Mammary epithelial cell (primary cell): ENCODE measurements at regions of chr4 and their contacts with region 1.

Region 1: GRCh38 chr4:2934813-2935761 is 28.1 kb downstream of the NOP14 start:
- DNase-seq: peak; percentile 87
- H3K4me3 ChIP-seq: peak overlapping the region; percentile 71 to 94 (median 86)
- H3K27ac ChIP-seq: peak overlapping the region; percentile 94
- H3K4me1 ChIP-seq: peaks cover 43% of the 10 kb centered on the region
- H3K27me3 ChIP-seq: no peaks in the 10 kb centered on the region
- CTCF ChIP-seq: no peak

Region 2: DNA sequence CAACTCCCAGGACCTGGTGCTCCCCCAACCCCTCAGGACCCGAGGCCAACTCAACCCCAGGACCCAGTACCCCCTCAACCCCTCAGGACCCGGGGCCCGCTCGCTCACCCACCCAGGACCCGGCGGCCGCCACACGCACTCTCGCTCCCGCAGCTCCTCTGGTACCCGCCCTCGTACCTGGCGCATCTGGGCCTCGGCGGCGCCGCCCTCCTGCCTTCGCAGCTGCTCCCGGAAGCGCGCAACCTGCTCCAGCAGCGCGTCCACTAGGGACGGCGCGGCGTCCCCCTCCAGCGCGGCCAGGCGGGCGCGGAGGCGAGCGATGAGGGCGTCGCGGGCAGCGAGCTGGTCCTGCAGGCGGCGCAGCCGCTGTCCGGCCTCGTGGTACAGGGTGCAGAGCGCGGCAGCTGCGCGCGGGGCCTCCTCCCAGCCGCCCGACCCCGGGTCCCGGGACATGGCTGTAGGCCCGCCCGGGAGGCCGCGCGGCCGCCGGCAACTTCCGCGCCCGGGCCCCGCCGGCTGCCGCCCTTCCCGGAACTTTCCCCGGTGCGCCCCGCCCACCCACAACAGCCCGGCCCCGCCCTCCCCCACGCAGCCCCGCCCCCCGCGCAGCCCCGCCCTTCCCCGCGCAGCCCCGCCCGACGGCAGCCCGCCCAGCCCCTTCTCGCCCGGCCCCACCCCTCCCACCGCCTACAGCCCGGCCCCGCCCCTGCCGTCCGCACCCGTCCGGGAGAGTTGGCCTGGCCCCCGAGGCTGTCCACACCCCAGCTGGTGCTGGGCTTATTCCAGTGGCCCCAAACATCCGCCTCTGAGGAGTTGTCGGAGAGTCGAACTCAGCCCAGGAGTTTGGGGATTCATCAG is 179.0 kb before region 1 on chr4 and contains the start of gene TNIP2:
- CTCF ChIA-PET with region 1: no interaction called
- dilution Hi-C with region 1: no loop called
- in situ Hi-C with region 1: loop called in 1 of 2 experiments (anchors 25 kb)
- intact Hi-C with region 1: no loop called
- DNase-seq: peak; percentile 81
- H3K4me3 ChIP-seq: peak within 1 kb of the TSS; percentile 79 to 85 (median 80)
- H3K27ac ChIP-seq: peak within 1 kb of the TSS; percentile 44
- H3K4me1 ChIP-seq: peaks cover 17% of the 10 kb centered on the region
- H3K27me3 ChIP-seq: no peaks in the 10 kb centered on the region
- CTCF ChIP-seq: peak in 1 of 2 donors; percentile 42
- total RNA-seq, gene TNIP2: 21.8 to 32.5 TPM

Region 3: GRCh38 chr4:2761035-2761923 is 173.8 kb before region 1 on chr4:
- CTCF ChIA-PET with region 1: interaction called, 8 read pairs
- dilution Hi-C with region 1: no loop called
- in situ Hi-C with region 1: loop called in 1 of 2 experiments (anchors 25 kb)
- intact Hi-C with region 1: loop called (anchors 2 kb)
- DNase-seq: no peak
- H3K4me3 ChIP-seq: no peak overlapping the region
- H3K27ac ChIP-seq: no peak overlapping the region
- H3K4me1 ChIP-seq: peaks cover 15% of the 10 kb centered on the region
- H3K27me3 ChIP-seq: no peaks in the 10 kb centered on the region
- CTCF ChIP-seq: no peak

Region 4: GRCh38 chr4:2963175-2963965 is 28.3 kb after region 1 on chr4 and contains the starts of genes GRK4 and NOP14:
- CTCF ChIA-PET with region 1: interaction called, 7 read pairs
- dilution Hi-C with region 1: no loop called
- in situ Hi-C with region 1: no loop called
- intact Hi-C with region 1: loop called (anchors 2 kb)
- DNase-seq: peak; percentile 97
- H3K4me3 ChIP-seq: peak within 1 kb of the TSS; percentile 60 to 89 (median 64)
- H3K27ac ChIP-seq: peak within 1 kb of the TSS; percentile 72
- H3K4me1 ChIP-seq: peaks cover 15% of the 10 kb centered on the region
- H3K27me3 ChIP-seq: no peaks in the 10 kb centered on the region
- CTCF ChIP-seq: peak; percentile 5 to 35
- total RNA-seq, gene GRK4: 5.4 to 6.8 TPM
- total RNA-seq, gene NOP14: 22.8 to 40.0 TPM

Region 5: GRCh38 chr4:2977211-2978088 is 42.4 kb after region 1 on chr4:
- CTCF ChIA-PET with region 1: no interaction called
- dilution Hi-C with region 1: loop called (anchors 5 kb)
- in situ Hi-C with region 1: no loop called
- intact Hi-C with region 1: no loop called
- DNase-seq: no peak
- H3K4me3 ChIP-seq: no peak overlapping the region
- H3K27ac ChIP-seq: no peak overlapping the region
- H3K4me1 ChIP-seq: no peaks in the 10 kb centered on the region
- H3K27me3 ChIP-seq: no peaks in the 10 kb centered on the region
- CTCF ChIP-seq: no peak

Region 6: GRCh38 chr4:3514806-3515460 is 579.8 kb after region 1 on chr4:
- CTCF ChIA-PET with region 1: no interaction called
- dilution Hi-C with region 1: no loop called
- in situ Hi-C with region 1: no loop called
- intact Hi-C with region 1: no loop called
- DNase-seq: peak; percentile 17
- H3K4me3 ChIP-seq: no peak overlapping the region
- H3K27ac ChIP-seq: no peak overlapping the region
- H3K4me1 ChIP-seq: no peaks in the 10 kb centered on the region
- H3K27me3 ChIP-seq: no peaks in the 10 kb centered on the region
- CTCF ChIP-seq: peak; percentile 41 to 60